Caco-2 (cell line): ENCODE measurements at regions of chr5 and their contacts with region 1.

Region 1: DNA sequence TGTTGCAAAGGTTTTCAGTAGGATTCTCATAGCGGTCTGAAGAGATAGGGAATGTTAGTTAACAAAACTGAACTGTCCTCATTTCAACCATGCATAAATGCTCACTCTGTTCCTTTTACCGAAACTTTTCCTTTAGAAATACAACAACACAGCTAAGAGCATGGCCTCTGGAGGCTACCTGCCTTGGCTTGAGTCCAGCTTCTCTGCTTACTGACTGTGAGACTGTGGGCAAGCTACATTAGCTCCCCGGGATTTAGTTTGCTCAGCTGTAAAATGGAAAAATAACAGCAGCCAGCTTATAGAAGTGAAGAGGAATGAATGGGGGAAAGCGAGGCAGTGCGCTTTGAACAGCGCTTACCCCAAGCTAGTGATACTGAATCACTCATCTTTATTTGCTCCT is 507.9 kb upstream of the DAP start:
- DNase-seq: no peak
- H3K4me3 ChIP-seq: no peak overlapping the region
- H3K4me3 Mint-ChIP-seq: no peak overlapping the region
- H3K27ac Mint-ChIP-seq: no peak overlapping the region
- H3K4me1 ChIP-seq: peaks cover 10% of the 10 kb centered on the region; the same call in 1 of the 2 replicates
- H3K4me1 Mint-ChIP-seq: peaks cover 15% of the 10 kb centered on the region
- H3K27me3 ChIP-seq: no peaks in the 10 kb centered on the region
- H3K27me3 Mint-ChIP-seq: no peaks in the 10 kb centered on the region
- CTCF ChIP-seq: no peak

Region 2: GRCh38 chr5:11334401-11334800 is 65.5 kb after region 1 on chr5:
- CTCF ChIA-PET with region 1: no interaction called
- POLR2A ChIA-PET with region 1: no interaction called
- intact Hi-C with region 1: loop called (anchors 1 kb)
- DNase-seq: no peak
- H3K4me3 ChIP-seq: no peak overlapping the region
- H3K4me3 Mint-ChIP-seq: no peak overlapping the region
- H3K27ac Mint-ChIP-seq: no peak overlapping the region
- H3K4me1 ChIP-seq: no peaks in the 10 kb centered on the region
- H3K4me1 Mint-ChIP-seq: no peaks in the 10 kb centered on the region
- H3K27me3 ChIP-seq: no peaks in the 10 kb centered on the region; the same call in 1 of the 2 replicates
- H3K27me3 Mint-ChIP-seq: no peaks in the 10 kb centered on the region
- CTCF ChIP-seq: peak in 1 of 2 experiments; percentile 30

Region 3: GRCh38 chr5:11355491-11355890 is 86.6 kb after region 1 on chr5:
- CTCF ChIA-PET with region 1: no interaction called
- POLR2A ChIA-PET with region 1: no interaction called
- intact Hi-C with region 1: no loop called
- DNase-seq: no peak
- H3K4me3 ChIP-seq: no peak overlapping the region
- H3K4me3 Mint-ChIP-seq: no peak overlapping the region
- H3K27ac Mint-ChIP-seq: no peak overlapping the region
- H3K4me1 ChIP-seq: no peaks in the 10 kb centered on the region; the same call in 1 of the 2 replicates
- H3K4me1 Mint-ChIP-seq: no peaks in the 10 kb centered on the region
- H3K27me3 ChIP-seq: no peaks in the 10 kb centered on the region
- H3K27me3 Mint-ChIP-seq: no peaks in the 10 kb centered on the region
- CTCF ChIP-seq: no peak

Region 4: GRCh38 chr5:11483630-11484029 is 214.7 kb after region 1 on chr5:
- CTCF ChIA-PET with region 1: no interaction called
- POLR2A ChIA-PET with region 1: no interaction called
- intact Hi-C with region 1: loop called (anchors 2 kb)
- DNase-seq: no peak
- H3K4me3 ChIP-seq: no peak overlapping the region
- H3K4me3 Mint-ChIP-seq: no peak overlapping the region
- H3K27ac Mint-ChIP-seq: no peak overlapping the region
- H3K4me1 ChIP-seq: no peaks in the 10 kb centered on the region
- H3K4me1 Mint-ChIP-seq: no peaks in the 10 kb centered on the region
- H3K27me3 ChIP-seq: no peaks in the 10 kb centered on the region
- H3K27me3 Mint-ChIP-seq: no peaks in the 10 kb centered on the region
- CTCF ChIP-seq: no peak

Region 5: GRCh38 chr5:11596185-11596584 is 327.3 kb after region 1 on chr5:
- CTCF ChIA-PET with region 1: no interaction called
- POLR2A ChIA-PET with region 1: no interaction called
- intact Hi-C with region 1: loop called (anchors 1 kb)
- DNase-seq: peak in 1 of 2 experiments; percentile 6
- H3K4me3 ChIP-seq: no peak overlapping the region
- H3K4me3 Mint-ChIP-seq: no peak overlapping the region
- H3K27ac Mint-ChIP-seq: peak overlapping the region; percentile 60
- H3K4me1 ChIP-seq: peaks cover 42% of the 10 kb centered on the region
- H3K4me1 Mint-ChIP-seq: peaks cover 22% of the 10 kb centered on the region
- H3K27me3 ChIP-seq: no peaks in the 10 kb centered on the region
- H3K27me3 Mint-ChIP-seq: no peaks in the 10 kb centered on the region
- CTCF ChIP-seq: no peak

Region 6: DNA sequence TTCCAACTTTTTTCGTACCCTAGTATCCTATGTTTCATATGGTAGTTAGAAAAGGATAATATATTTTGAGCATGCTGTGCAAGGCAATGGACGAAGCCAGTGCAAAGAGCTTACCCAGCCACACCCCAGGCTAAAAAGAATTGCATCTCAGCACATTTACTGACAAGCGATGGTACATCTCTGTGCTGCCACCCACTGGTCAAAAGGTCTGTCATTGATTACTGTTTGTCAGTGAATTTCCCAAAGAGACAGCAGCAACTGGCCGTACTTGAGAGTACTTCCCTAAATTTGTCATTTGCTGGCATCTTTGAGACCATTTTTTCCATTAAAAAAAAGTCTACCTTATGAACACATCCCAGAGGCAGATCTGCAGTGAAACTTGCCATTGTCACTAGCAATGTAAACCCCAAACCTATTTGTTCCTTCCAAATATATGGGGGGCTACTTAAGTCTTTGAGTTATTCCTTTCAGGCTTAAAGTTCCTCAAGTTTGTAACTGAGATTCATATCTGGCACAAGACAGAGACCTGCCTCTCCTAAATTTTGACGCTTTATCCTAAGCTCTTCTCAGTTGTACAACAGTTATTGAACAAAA is 451.1 kb after region 1 on chr5:
- CTCF ChIA-PET with region 1: no interaction called
- POLR2A ChIA-PET with region 1: no interaction called
- intact Hi-C with region 1: loop called (anchors 1 kb)
- DNase-seq: peak; percentile 72 to 78
- H3K4me3 ChIP-seq: no peak overlapping the region
- H3K4me3 Mint-ChIP-seq: no peak overlapping the region
- H3K27ac Mint-ChIP-seq: no peak overlapping the region
- H3K4me1 ChIP-seq: no peaks in the 10 kb centered on the region
- H3K4me1 Mint-ChIP-seq: no peaks in the 10 kb centered on the region
- H3K27me3 ChIP-seq: no peaks in the 10 kb centered on the region
- H3K27me3 Mint-ChIP-seq: no peaks in the 10 kb centered on the region
- CTCF ChIP-seq: peak; percentile 64 to 69